GM13977 (cell line): ENCODE measurements at regions of chr4 and their contacts with region 1.

Region 1: DNA sequence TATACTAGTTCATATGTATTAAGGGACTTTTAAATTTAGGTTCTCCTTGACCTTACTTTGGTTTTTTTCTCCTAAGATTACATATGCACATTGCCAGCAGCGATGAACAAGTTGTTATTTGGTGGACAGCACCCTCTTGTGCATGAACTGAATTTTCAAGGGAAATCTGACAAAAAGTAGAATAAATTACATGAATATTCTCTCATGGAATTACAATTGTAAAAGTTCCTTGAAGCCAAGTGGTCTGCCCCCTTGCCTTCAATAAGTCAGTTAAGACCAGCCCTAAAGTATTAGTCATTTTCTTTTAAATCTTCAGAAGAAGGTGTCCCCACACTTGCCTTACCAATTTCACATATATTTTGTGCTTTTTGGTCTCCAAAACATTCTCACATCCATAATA is 30.7 kb upstream of the SMARCA5 start:
- DNase-seq: peak; percentile 40
- CTCF ChIP-seq: peak; percentile 67

Region 2: GRCh38 chr4:142463206-142463605 is 1019.6 kb before region 1 on chr4:
- in situ Hi-C with region 1: no loop called
- DNase-seq: no peak
- CTCF ChIP-seq: no peak

Region 3: GRCh38 chr4:143054971-143055370 is 427.9 kb before region 1 on chr4:
- in situ Hi-C with region 1: no loop called
- DNase-seq: no peak
- CTCF ChIP-seq: no peak

Region 4: DNA sequence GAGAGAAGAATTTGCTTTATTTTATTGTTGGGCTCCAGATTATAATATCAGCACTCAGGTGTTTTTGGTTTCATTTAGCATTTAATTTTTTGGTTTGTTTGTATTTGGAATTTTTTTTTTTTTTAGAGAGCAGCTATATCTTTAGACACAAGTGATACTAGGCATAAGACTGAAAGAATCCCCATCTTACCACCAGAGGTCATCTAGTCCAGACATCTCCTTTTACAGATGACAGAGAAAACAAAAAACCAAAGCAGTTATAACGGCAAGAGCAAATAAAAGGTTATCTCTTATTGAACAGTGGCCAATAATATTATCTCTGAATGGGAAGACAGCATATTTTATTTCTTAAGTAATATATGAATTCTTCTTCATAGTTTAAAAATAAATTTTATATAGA is 275.3 kb before region 1 on chr4:
- in situ Hi-C with region 1: loop called (anchors 25 kb)
- DNase-seq: no peak
- CTCF ChIP-seq: peak; percentile 3

Region 5: GRCh38 chr4:143575331-143575730 is 92.5 kb after region 1 on chr4:
- in situ Hi-C with region 1: no loop called
- DNase-seq: no peak
- CTCF ChIP-seq: no peak